Right ventricle myocardium superior (tissue), 1 donor: ENCODE measurements at regions of chr13 and their contacts with region 1.

Region 1: DNA sequence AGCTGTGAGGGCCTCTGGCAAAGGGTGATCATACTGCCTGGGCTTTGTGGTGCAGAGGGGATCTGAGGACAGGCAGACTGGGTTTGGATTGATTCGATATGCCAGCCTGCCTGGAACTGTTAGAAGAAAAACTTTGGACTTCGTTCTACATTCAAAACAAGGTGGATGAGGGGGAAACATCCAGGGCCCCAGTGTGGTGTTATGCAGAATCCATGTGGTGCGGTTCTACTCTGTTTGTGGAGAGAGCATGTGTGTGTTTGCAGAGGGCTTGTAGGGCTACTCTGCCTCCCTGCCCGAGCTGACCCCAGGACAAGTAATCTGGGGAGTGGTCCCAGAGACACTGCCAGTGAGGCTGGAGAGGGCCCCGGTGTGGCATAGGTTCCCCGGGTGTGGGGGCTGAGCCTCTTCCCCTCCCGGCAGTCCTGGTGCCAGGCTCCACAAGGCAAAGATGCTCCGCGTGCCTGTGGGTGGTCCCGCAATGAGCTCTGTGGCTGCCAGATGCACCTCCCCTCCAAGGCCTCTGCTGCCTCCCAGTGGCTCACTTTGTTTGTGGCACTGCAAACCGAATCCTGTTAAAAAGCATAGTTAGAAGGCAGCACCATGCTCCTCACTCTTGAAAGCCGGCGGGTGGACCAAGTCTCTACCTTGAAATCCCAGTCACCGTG is 22.3 kb upstream of the TFDP1 start:
- DNase-seq: peak; percentile 71
- ATAC-seq: peak; percentile 89

Region 2: GRCh38 chr13:113458253-113459065 is 103.8 kb before region 1 on chr13:
- intact Hi-C with region 1: loop called (anchors 5 kb)
- DNase-seq: no peak
- ATAC-seq: peak; percentile 50

Region 3: GRCh38 chr13:113490496-113491417 is 71.5 kb before region 1 on chr13 and contains the start of gene DCUN1D2:
- intact Hi-C with region 1: no loop called
- DNase-seq: peak; percentile 97
- ATAC-seq: peak; percentile 92
- total RNA-seq, gene DCUN1D2: 196 TPM

Region 4: GRCh38 chr13:113825841-113826240 is 263.6 kb after region 1 on chr13:
- intact Hi-C with region 1: no loop called
- DNase-seq: peak; percentile 19
- ATAC-seq: no peak

Region 5: GRCh38 chr13:113907635-113908617 is 345.7 kb after region 1 on chr13:
- intact Hi-C with region 1: no loop called
- DNase-seq: no peak
- ATAC-seq: no peak